ENCODE measurements at regions of chr1 and their contacts with region 1.

Region 1: DNA sequence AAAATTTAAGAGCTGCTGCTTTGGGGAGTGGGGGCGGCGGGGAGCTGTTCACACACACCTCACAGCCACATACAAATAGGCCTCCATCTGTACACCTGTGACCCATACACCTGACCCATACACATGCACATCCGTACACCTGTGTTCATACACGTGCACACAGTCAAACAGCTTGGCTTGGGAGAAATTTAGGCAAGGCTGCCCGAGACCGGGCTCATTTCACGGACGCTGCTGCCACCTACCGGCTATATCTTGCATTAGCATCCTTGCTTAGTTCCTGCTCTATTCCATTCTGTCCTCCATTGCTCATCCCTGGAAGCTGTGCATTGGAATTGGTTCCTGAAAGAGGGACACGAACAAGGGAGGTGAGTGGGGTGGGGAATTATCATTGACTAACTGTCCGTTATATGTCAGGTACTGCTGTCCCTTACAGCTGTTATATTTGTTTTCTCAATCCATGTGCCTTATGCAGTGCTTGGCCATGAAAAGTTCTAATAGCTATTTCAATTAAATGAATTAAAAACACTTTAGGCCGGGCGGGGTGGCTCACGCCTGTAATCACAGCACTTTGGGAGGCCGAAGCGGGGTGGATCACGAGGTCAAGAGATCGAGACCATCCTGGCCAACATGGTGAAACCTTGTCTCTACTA is 37.1 kb upstream of the EPB41 start:
- DNase-seq: peak; percentile 23
- H3K4me3 ChIP-seq: no peak overlapping the region
- H3K27ac ChIP-seq: no peak overlapping the region
- H3K27me3 ChIP-seq: peaks cover 7% of the 10 kb centered on the region
- CTCF ChIP-seq: peak; percentile 94

Region 2: GRCh38 chr1:28648474-28649198 is 228.6 kb before region 1 on chr1 and contains the start of gene RNU11:
- CTCF ChIA-PET with region 1: interaction called, 25 read pairs
- POLR2A ChIA-PET with region 1: interaction called, 22 read pairs
- DNase-seq: peak; percentile 98
- H3K4me3 ChIP-seq: peak within 1 kb of the TSS; percentile 57
- H3K27ac ChIP-seq: peak within 1 kb of the TSS; percentile 89
- H3K27me3 ChIP-seq: no peaks in the 10 kb centered on the region
- CTCF ChIP-seq: no peak
- polyA plus RNA-seq, gene RNU11: not detected in 2 replicates

Region 3: DNA sequence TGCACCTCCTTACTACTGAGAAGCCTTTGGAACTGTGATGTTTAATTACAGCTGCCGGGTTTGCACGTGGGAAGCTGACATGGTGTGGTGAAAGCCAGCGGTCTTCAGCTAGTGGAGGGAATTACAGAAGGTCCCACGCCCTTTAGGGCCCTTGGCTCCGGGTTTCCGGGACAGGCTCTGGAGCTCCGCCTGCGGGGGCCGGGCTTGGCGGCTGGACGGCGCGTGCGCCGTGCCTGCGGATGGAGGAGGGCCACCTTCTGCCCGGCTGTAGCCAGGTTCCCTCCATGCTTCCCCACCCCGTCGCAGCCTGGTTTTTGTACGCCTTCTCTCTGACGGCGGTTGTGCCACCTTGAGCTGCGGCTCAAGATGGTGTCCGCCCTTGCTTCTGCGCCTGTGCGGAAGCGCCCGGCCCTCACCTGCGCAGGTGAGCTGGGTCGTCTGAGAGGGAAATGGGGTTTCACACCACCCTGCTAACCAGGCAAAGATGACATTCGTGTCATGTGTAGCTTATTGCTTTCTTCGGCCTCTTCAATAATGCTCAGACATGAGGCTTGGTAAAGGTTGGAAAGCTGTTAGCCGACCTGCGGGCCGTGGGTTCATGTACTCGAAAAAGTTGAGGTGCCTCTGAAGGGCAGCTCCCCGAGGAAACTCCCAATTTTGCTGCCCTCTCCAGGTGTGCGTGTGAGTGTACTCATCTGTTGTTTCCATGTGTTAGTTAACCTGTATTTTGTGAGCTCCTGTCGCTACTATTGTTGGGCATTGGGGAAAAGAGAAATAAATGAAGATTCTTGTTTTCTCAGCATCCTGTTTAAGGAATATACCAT is 101.9 kb before region 1 on chr1:
- CTCF ChIA-PET with region 1: interaction called, 318 read pairs
- POLR2A ChIA-PET with region 1: no interaction called
- DNase-seq: no peak
- H3K4me3 ChIP-seq: 0 out of 2 replicates have a peak overlapping the region, but pooled peaks have one; percentile 4
- H3K27ac ChIP-seq: no peak overlapping the region
- H3K27me3 ChIP-seq: no peaks in the 10 kb centered on the region
- CTCF ChIP-seq: no peak

Region 4: DNA sequence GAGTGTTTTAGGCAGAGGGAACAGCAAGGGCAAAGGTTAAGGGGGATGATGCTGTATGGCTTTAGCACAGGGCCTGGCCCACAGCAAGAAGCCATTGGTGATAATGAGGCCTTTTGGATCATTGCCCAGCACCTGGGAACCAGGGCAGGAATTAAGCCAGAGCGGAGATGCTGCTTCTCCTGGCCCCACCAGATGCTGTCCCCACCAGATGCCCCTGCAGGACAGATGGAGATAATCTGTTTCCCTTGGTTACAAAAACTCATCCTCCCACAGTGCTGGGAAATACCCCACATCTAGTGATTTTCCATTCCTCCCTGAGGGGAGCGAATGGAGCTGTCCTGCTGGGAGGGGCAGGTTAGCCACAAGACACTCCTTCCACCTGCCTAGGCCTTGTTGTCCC is 46.4 kb before region 1 on chr1:
- CTCF ChIA-PET with region 1: interaction called, 11 read pairs
- POLR2A ChIA-PET with region 1: no interaction called
- DNase-seq: no peak
- H3K4me3 ChIP-seq: no peak overlapping the region
- H3K27ac ChIP-seq: no peak overlapping the region
- H3K27me3 ChIP-seq: peaks cover 9% of the 10 kb centered on the region
- CTCF ChIP-seq: no peak

Region 5: DNA sequence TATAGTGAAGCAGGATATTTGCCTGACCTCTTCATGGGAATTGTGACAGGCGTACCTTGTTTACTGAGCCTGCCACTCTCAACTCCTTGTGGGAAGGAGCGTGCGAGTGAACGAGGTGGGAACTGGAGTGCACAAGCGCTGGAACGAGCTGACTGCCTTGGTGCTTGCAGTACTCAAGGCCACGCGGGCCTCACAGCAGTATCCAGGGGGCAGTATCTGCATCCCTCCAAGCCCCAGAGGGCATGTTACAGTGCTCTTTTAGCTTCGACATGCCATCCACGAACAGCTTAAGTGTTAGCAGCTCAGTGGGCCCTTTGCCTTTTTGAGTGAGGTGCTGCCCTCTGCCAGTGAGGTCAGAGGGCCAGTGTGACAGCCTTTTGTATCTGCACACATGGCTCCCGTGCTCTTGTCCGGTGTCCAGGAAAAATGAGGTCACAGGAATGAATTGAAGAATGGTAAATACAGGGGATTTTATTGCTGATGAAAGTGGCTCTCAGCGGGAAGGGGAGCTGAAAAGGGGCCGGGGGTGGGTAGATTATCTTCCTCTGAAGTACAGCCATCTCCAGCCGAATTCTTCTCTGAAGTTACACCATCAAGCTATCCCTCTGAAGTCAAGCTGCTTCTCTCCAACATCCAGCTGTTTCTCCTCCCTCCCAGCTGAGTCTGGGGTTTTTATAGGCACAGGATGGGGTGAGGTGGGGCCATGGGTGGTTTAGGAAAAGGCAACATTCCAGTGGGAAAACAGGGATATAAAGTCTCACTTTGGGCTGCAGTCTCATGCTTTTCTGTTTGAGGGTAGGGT is 106.5 kb after region 1 on chr1:
- CTCF ChIA-PET with region 1: no interaction called
- POLR2A ChIA-PET with region 1: no interaction called
- DNase-seq: no peak
- H3K4me3 ChIP-seq: no peak overlapping the region
- H3K27ac ChIP-seq: no peak overlapping the region
- H3K27me3 ChIP-seq: no peaks in the 10 kb centered on the region
- CTCF ChIP-seq: no peak

Measured in AG04450 (cell line).